ENCODE measurements at regions of chr6 and their contacts with region 1.

Region 1: DNA sequence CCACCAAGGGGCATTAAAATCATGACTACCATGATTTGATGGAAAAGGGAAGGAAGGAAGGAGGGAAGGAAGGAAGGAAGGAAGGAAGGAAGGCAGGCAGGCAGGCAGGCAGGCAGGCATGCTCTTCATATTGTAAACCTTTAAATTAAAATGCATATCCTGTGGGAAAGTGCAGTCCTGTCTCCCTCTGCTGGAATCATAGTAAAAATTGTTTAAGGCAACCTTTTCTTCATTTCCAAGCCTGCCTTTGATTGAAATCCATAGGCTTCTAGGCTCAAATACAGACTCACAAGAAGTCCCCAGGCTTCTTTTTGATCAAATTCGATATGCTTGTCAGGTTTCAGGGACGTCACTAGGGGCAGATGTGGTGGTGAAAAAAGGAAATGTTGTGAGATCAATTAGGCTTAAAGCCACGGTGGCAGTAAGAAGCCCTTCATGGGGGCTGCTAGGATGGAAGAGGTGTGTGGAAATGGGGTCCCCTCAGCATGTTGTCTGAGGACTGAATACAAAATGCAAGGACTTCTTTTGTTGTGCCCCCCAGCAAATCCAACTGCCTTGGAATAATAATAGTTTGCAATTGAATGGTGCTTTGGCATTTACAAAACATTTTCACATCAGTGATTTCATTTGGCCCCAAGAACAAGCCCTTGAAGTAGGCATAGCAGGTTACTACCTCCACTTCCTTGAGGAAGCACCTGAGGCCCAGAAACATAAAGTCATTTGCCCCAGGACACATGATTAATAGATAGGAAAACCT is 25.6 kb upstream of the GABRR1 start:
- DNase-seq: no peak
- ATAC-seq: peak; percentile 28

Region 2: GRCh38 chr6:89122625-89123024 is 120.1 kb before region 1 on chr6:
- intact Hi-C with region 1: loop called (anchors 5 kb)
- DNase-seq: no peak
- ATAC-seq: peak; percentile 54

Region 3: DNA sequence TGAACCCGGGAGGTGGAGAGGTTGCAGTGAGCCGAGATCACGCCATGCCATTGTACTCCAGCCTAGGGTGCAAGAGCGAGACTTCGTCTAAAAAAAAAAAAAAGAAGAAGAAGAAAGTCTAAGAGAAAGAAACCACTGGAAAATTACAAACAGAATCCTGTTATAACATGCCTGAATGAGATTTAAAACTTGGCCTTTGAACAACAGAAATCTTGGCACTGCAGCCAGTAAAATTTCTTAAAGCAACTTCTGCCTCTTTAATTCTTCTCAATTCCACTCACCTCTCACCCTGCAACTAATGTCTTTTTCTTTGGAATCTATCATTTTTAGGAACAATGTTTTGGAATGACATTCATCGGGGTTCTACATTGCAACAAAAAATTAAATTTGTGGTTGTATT is 70.6 kb before region 1 on chr6:
- intact Hi-C with region 1: no loop called
- DNase-seq: no peak
- ATAC-seq: no peak